Activated CD4-positive, alpha-beta T cell treated with anti-CD3 and anti-CD28 coated beads for 36 hours (primary cell): ENCODE measurements at regions of chr16 and their contacts with region 1.

Region 1: DNA sequence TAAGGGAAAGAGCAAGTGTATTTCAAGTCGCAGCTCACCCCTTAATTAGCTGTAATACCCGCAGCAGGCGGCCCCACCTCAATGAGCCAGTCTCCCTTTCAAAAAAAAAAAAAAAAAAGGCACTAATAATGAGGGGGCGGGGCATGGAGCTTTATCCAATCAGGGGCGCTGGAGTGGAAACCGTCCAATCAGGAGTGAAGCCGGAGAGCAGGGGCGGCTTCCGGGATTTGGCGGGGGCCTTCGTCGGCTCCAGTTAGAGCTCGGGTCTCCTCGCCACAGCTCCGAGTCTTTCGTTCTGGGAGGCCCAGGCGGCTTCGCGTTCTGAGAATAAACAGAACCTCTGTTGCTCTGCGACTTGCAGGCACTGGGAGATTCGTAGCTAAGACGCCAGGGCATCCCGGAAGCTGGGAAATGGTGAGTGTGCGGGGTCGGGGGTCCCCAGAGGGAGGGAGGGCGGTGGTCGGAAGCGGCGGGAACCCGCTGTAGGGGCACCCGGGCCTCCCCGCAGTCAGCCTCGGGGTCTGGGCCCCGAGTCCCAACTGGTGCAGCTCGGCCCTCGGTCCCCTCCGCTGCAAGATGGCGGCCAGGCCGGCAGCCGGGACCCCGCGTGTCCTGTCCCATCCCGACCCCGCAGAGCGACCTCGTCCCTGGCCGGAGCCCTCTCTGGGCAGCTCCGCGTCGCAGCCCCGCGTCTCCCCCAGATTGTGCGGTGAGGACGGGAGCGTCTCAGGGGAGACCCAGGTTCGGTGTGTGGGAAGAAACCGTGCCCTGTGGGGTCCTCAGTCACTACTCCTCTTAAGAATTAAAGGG is at the start of gene ZNF267:
- DNase-seq: peak; percentile 96
- ATAC-seq: peak; percentile 60
- H3K4me3 Mint-ChIP-seq: peak within 1 kb of the TSS; percentile 94
- H3K27ac Mint-ChIP-seq: peak within 1 kb of the TSS; percentile 97
- H3K4me1 Mint-ChIP-seq: peaks cover 73% of the 10 kb centered on the region
- H3K27me3 Mint-ChIP-seq: no peaks in the 10 kb centered on the region
- total RNA-seq, gene ZNF267: 61.9 to 64.9 TPM

Region 2: DNA sequence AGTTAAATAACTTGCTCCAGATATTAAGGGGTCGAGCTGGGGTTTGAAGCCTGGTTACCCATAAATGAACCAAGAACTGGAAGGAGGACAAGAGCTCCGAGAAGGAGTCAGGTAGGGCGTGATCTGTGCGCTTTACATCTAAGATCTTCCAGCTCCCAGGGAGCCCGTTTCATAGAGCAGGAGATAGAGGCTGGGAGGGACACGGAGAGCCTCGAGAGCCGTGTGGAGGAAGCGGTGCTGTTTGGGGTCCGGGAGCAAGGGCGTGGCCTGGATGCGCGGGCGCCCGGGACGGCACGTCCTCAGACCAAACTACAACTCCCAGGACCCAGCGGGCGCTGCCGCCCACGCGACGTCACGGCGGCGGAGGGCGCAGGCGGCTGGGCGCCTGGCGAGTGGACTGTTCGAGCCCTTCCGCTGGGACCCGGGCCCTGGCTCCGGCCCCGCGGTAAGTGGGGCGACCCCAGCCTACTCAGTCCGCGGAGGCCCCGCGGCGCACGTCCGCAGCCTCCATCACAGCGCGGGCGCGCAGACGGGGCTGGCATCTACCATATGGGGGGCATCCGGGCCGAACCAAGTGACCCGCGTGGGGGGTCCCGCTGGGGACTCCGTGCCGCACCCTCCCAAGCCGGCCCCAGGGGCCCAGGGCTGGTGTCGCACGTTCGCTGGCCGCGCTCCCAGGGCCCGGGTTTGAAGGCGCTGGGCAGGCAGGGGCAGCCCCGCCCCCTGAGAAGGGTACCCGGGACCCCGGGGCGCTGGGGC is 765.5 kb before region 1 on chr16 and contains the start of gene BCKDK:
- CTCF ChIA-PET with region 1: no interaction called
- POLR2A ChIA-PET with region 1: interaction called, 3 read pairs
- intact Hi-C with region 1: loop called in 1 of 2 experiments (anchors 5 kb)
- DNase-seq: peak; percentile 90
- ATAC-seq: peak; percentile 79
- H3K4me3 Mint-ChIP-seq: peak within 1 kb of the TSS; percentile 86
- H3K27ac Mint-ChIP-seq: peak within 1 kb of the TSS; percentile 96
- H3K4me1 Mint-ChIP-seq: peaks cover 22% of the 10 kb centered on the region
- H3K27me3 Mint-ChIP-seq: no peaks in the 10 kb centered on the region
- total RNA-seq, gene BCKDK: 50.0 to 53.3 TPM

Region 3: GRCh38 chr16:31833047-31833446 is 40.7 kb before region 1 on chr16:
- CTCF ChIA-PET with region 1: no interaction called
- POLR2A ChIA-PET with region 1: no interaction called
- intact Hi-C with region 1: no loop called
- DNase-seq: no peak
- ATAC-seq: no peak
- H3K4me3 Mint-ChIP-seq: no peak overlapping the region
- H3K27ac Mint-ChIP-seq: no peak overlapping the region
- H3K4me1 Mint-ChIP-seq: no peaks in the 10 kb centered on the region
- H3K27me3 Mint-ChIP-seq: no peaks in the 10 kb centered on the region

Region 4: GRCh38 chr16:31888735-31889134 is 15.0 kb after region 1 on chr16:
- CTCF ChIA-PET with region 1: interaction called, 8 read pairs
- POLR2A ChIA-PET with region 1: no interaction called
- intact Hi-C with region 1: loop called (anchors 1 to 2 kb)
- DNase-seq: no peak
- ATAC-seq: peak; percentile 38
- H3K4me3 Mint-ChIP-seq: peak overlapping the region; percentile 40
- H3K27ac Mint-ChIP-seq: peak overlapping the region; percentile 88
- H3K4me1 Mint-ChIP-seq: peaks cover 77% of the 10 kb centered on the region
- H3K27me3 Mint-ChIP-seq: no peaks in the 10 kb centered on the region

Region 5: DNA sequence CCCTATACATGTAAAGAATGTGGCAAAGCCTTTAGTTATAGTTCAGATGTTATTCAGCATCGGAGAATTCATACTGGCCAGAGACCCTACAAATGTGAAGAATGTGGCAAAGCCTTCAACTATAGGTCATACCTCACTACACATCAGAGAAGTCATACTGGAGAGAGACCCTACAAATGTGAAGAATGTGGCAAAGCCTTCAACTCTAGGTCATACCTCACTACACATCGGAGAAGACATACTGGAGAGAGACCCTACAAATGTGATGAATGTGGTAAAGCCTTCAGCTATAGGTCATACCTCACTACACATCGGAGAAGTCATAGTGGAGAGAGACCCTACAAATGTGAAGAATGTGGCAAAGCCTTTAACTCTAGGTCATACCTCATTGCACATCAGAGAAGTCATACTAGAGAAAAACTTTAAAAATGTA is 42.3 kb after region 1 on chr16:
- CTCF ChIA-PET with region 1: interaction called, 4 read pairs
- POLR2A ChIA-PET with region 1: no interaction called
- intact Hi-C with region 1: loop called in 1 of 2 experiments (anchors 5 kb)
- DNase-seq: no peak
- ATAC-seq: peak; percentile 8
- H3K4me3 Mint-ChIP-seq: no peak overlapping the region
- H3K27ac Mint-ChIP-seq: no peak overlapping the region
- H3K4me1 Mint-ChIP-seq: peaks cover 14% of the 10 kb centered on the region
- H3K27me3 Mint-ChIP-seq: no peaks in the 10 kb centered on the region